Posterior cingulate gyrus (tissue), 11 donors: ENCODE measurements at regions of chr6 and their contacts with region 1.

Region 1: DNA sequence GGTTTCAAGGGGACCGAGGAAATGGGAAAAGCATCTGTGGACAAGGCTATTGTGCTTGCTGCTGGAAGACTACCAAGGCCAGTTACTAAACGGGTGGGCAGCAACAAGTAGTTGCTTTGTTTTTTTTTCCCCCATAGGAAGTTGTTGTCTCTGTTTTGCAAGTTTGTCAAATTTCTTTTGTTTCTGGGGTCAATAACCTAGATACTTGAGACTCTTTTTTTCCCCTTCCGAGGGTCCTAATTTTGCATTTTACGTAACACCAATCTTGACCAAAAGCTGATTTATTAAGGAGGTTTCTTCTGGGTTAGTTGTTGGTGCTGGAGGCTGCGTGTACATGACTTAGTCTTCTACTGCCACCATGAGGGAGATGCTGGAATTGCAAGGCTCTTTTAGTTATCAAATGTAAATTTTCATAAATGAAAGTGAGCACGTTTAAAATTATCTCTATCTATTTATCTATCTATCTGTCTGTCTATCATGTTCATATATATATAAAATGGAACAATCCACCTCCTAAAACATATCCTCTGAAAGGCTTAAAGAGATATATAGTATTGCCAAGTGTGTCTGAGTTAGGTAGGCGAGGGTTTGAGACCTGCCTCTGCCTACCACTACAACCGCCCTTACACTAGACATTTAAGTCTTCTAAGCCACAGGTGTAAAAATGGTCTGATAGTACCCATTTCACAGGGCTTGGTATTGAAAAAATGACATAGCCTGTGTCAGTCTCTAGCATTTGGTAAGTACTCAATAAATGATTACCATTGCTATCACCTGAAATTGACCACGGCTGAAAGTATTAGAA is 60.2 kb downstream of the GCLC start:
- DNase-seq: peak in 5 of 10 donors; percentile 36 to 76 (median 67)

Region 2: DNA sequence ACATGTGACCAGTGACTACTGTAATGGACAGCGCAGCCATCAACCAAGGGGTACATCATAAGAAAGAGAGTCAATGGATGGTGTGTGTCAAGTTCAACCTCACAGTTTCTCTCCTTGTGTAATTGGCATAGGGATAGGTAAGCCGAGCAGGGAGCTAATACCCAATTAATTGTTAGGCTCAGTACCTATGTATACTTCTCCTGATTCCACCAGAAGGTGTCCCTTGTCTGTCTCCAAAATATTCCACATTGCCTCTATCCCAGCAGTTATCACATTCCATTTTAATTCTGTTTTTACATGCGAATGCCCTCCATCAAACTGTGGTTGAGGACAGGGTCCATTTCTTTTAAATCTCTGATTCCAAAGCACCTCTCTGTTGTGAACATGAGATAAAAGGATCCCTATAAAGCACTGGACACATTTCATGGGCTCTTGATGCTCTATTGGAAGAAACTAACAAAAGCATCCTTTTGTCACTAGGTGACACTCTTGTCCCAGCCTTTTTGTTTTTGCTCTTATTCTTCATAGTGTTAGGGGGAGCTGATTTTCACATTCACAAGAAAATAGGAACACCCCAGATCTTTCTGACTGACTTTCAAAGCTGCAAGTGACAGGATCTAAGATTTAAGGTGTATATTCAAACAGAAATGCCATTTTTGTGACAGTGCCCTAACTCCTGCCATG is 380.5 kb before region 1 on chr6:
- intact Hi-C with region 1: loop called (anchors 2 kb)
- DNase-seq: no peak

Region 3: GRCh38 chr6:53359072-53359842 is 125.4 kb before region 1 on chr6:
- intact Hi-C with region 1: loop called (anchors 5 kb)
- DNase-seq: peak; percentile 94 to 99 (median 96)

Region 4: GRCh38 chr6:53437557-53438202 is 47.0 kb before region 1 on chr6:
- intact Hi-C with region 1: loop called (anchors 2 kb)
- DNase-seq: peak in 2 of 10 donors; percentile 21 to 43

Region 5: GRCh38 chr6:53752856-53753255 is 268.2 kb after region 1 on chr6:
- intact Hi-C with region 1: no loop called
- DNase-seq: no peak